ENCODE measurements at regions of chr15 and their contacts with region 1.

Region 1: DNA sequence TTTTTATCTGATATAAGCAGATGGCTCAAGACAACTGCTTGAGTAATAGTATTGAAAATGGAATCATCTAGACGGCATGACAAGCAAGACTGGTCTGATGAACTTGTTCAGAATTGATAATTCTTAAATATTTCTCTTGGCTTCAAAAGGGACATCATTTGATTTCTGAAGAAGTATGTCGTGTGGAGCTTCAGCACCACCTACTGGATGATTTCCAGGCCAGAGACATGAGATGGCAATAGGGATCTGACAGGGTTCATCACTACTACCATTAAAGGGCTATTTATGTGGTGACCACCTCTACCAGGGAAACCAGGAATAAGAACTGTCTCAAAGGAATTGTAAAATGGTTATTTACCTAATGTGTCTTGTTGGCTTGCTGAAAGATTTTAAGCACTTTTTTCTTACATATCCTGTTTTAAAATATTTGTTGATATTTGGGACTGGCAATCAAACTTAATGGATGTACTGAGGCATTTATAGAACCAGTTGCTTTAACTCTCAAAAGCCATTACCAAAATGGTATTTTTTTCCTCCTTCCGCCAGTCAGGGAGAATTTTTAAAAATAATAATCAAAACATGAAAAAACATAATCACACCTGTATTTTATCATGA is 99.5 kb upstream of the FAM98B start:
- DNase-seq: peak in 8 of 10 donors; percentile 24 to 89 (median 55)
- H3K4me3 ChIP-seq: no peak overlapping the region
- H3K27ac ChIP-seq: peak overlapping the region in 8 of 59 donors; percentile 3 to 57 (median 24)
- H3K27me3 ChIP-seq: no peaks in the 10 kb centered on the region
- CTCF ChIP-seq: peak; percentile 38 to 98 (median 86)

Region 2: DNA sequence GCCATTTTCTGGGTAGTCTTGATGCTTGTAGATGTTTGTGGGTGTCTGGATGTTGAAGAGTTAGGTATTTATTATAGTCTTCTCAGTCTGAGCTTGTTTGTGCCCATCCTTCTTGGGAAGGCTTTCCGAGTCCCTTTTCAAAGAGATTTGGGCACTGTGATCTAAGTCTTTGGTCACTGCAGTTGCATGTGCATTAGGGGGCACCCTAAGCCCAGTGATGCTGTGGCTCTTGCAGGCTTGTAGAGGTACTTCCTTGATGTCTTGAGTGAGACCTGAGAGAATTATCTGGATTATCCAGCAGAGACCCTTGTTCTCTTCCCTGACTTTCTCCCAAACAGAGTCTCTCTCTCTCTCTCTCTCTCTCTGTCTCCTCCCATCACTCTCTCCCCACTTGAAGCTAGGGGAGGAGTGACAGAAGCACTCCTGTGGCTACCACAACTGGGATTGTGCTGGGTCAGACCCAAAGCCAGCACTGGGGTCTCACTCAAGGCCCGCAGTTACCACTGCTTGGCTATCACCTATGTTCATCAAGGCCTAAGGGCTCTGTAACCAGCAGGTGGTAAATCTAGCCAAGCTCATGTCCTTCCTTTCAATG is 351.4 kb before region 1 on chr15:
- intact Hi-C with region 1: loop called (anchors 2 to 5 kb)
- DNase-seq: peak in 6 of 10 donors; percentile 63 to 76 (median 70)
- H3K4me3 ChIP-seq: no peak overlapping the region
- H3K27ac ChIP-seq: no peak overlapping the region
- H3K27me3 ChIP-seq: no peaks in the 10 kb centered on the region
- CTCF ChIP-seq: peak in 53 of 56 donors; percentile 29 to 77 (median 59)

Region 3: DNA sequence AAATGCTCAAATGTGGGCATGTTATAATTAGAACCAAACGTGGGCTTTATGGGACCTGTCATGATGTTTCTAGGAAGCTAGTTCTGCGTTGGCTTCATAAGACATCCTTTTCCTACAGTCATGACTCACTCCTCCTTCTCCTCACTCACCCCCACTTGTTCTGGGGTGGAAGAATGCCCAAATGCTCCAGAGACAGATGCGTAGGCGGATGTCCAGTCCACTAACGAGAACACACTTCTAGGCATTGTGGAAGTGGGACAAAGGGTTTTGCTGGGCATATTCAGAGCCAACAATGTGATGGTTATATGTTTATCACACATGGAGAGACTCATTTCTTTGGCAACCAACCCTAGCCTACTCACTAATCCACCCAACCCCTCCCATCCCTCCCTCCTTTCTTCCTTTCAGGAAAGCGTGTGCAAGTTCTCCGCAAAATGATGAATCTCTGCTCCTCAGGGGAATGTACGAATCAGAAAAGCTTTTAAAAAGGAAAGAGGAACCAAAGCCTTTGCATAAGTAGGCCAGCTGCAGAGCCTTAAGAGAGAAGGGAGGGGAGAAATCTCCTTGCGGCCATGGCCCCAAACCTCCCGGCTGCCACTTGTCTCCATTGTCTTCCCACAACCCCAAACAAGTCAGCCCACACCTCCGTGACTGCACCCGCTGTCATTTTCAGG is 224.8 kb before region 1 on chr15:
- intact Hi-C with region 1: loop called in 1 of 2 experiments (anchors 5 kb)
- DNase-seq: peak in 8 of 10 donors; percentile 57 to 84 (median 63)
- H3K4me3 ChIP-seq: peak overlapping the region; percentile 27 to 70 (median 49)
- H3K27ac ChIP-seq: peak overlapping the region in 56 of 59 donors; percentile 49 to 89 (median 79)
- H3K27me3 ChIP-seq: no peaks in the 10 kb centered on the region
- CTCF ChIP-seq: peak in 2 of 56 donors; percentile 2 to 12

Region 4: DNA sequence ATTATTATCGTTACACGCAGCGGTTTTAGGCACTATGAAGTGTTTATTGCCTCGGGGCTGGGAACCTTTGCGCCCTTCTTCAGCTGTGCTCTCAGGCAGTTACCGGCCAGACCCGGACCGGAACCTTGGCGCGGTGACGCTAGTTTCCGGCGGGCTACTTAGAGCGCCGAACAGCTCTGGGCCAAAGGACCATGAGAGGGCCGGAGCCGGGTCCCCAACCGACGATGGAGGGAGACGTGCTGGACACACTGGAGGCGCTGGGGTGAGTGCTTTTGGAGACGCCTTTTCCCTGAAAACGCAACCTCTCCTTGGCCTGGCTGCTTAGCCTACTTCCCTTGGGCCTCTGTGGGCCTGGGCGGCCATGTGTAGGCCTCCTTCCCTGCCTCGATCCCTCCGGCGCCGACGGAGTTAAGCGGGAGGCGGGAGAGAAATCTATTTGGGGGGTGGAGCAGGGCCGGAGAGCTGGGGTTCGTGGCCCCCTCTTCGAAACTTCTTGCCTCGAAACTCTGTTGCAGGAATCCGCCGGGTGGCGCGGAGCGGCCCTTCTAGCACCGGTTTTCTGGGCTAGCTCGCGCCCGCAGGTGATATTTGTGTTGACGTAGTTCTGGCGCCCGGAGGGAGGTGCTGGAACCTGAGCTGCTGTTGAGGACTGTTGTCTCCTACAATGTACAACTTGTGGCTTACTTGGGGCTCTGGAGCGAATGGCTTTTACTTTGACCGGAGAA is 99.7 kb after region 1 on chr15 and contains the start of gene FAM98B:
- intact Hi-C with region 1: loop called in 1 of 2 experiments (anchors 10 kb)
- DNase-seq: peak; percentile 84 to 93 (median 90)
- H3K4me3 ChIP-seq: peak within 1 kb of the TSS; percentile 53 to 99 (median 88)
- H3K27ac ChIP-seq: peak within 1 kb of the TSS; percentile 71 to 98 (median 90)
- H3K27me3 ChIP-seq: no peaks in the 10 kb centered on the region
- CTCF ChIP-seq: peak in 47 of 56 donors; percentile 4 to 68 (median 36)
- total RNA-seq, gene FAM98B: 17.3 to 53.0 (median 30.8) TPM

Measured in dorsolateral prefrontal cortex (tissue), 120 donors.